K562 (cell line): ENCODE measurements at regions of chr16 and their contacts with region 1.

Region 1: DNA sequence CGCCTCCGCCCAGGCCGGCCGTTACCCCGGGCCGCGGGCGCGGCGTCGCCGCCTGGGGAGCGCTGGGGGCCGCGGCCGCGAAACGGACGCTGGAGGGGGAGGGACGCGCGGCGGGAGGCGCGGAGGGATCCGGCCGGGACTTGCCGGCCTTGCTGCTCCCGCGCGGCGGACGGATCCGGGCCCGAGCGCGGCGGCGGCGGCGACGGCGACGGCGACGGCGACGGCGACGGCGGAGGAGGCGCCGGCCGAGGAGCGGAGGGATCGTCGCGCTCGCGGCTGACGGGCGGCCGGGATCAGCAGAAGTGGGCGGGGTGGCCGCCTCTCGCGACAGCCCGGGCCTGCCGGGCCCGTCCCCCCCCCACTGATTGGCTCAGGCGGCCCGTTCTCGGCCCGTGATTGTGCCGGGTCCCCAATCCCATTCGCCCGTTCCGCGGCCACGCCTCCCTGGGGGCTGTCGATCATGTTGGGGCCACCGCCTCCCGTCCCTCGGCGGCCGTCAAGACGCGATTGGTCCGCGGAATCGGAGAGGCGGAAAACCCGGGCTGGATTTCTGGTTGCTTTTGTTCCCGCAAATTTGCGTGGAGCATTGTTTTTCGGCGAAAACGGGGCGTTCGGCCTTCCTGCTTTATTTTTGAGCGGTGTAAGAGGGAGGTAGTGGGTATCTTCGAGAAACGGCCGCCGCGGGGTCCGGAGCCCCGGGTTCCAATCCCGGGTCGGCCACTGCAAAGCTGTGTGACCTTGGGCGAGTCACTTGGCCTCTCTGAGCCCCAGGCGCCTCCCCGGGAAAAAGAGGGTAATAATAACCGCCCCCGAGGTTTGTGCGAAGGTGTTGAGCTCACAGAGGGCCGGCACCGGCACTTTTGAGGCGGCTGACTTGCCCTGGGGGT is at the start of gene ZCCHC14:
- DNase-seq: peak; percentile 99
- ATAC-seq: peak; percentile 99
- H3K4me3 ChIP-seq: peak within 1 kb of the TSS; percentile 53
- H3K27ac ChIP-seq: peak within 1 kb of the TSS; percentile 54; the same call in 1 of the 3 replicates
- H3K4me1 ChIP-seq: peaks cover 14 to 28% of the 10 kb centered on the region in 2 experiments; a peak in 4 of 5 replicates
- H3K27me3 ChIP-seq: no peaks in the 10 kb centered on the region; a peak in 2 of 5 replicates
- CTCF ChIP-seq: peak in 1 of 3 experiments; percentile 21; a peak in 2 of 6 replicates
- EP300 ChIP-seq: no peak
- POLR2A ChIP-seq: no peak
- RAD21 ChIP-seq: no peak
- polyA plus RNA-seq, gene ZCCHC14: 1.5 TPM

Region 2: DNA sequence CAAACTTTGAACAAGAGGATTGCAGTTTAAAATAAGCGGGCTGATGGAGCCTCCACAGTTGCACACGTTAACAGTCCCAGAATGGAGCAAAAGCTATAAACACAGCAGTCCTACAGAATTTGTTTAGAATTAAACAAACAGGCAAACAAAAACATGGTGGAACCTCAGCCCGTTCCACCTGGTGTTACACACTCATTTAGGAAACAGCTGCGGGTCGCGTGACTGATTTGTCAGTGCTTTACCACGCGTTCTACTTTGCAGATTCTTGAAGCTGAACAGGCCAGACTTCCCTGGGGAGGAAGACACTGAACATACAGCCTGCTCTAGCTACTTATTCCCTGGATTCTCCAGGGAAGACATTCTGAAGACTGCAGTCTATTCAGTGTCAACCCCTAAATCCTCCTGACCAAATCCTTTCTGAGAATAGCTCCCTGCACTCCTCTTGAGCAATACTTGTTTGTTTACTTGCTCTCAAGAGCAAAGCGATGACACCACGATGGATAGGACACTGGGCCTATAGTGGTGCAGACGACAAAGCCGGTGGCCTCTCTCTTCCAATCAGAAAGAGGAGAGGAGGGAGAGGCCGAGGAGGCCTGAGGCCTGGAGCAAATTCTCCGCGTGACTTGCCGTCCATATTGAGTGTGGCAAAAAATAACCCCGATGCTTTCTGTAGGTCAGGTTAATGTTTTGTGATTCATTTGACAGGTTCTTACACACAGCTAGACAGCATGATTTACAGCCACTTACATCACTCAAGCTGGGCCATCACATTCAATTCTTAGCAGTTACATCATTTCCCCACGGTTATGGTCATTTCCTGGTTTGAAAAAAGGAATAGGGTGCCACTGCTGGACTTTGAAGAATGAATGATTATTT is 104.8 kb before region 1 on chr16:
- CTCF ChIA-PET with region 1: no interaction called
- POLR2A ChIA-PET with region 1: no interaction called
- in situ Hi-C with region 1: no loop called
- intact Hi-C with region 1: loop called (anchors 5 kb)
- DNase-seq: peak; percentile 83 to 98 (median 92)
- ATAC-seq: peak; percentile 84
- H3K4me3 ChIP-seq: no peak overlapping the region
- H3K27ac ChIP-seq: peak overlapping the region; percentile 97
- H3K4me1 ChIP-seq: peaks cover 28 to 40% of the 10 kb centered on the region in 2 experiments; a peak in 4 of 5 replicates
- H3K27me3 ChIP-seq: no peaks in the 10 kb centered on the region
- CTCF ChIP-seq: no peak
- EP300 ChIP-seq: peak; percentile 93
- POLR2A ChIP-seq: peak; percentile 74
- RAD21 ChIP-seq: no peak

Region 3: DNA sequence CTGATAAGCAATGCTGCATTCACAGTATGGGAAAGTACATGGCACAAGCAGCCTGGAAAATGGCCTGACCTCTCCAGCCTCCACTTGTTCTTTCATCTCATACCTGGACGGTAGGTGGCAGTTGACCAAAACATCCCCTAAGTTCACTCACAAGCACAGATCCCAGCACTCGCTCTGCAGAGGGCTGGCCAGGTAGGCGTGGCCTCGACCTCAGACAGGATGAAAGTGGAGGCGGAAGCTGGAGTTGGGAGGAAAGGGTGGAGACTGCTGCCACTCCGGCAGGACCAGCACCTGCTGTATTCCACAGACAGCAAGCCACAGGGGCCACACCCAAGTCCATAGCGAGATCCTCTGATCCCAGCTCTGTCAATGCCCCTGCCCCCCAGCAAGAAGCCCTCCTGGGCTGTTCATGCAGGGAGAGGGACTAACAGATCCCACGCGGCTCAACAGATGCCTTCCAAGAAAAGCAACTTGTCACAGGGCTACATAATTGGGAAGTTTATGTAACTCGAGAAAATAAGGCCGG is 31.4 kb before region 1 on chr16:
- CTCF ChIA-PET with region 1: no interaction called
- POLR2A ChIA-PET with region 1: no interaction called
- in situ Hi-C with region 1: no loop called
- intact Hi-C with region 1: loop called (anchors 1 kb)
- DNase-seq: peak; percentile 90 to 96 (median 96)
- ATAC-seq: peak; percentile 96
- H3K4me3 ChIP-seq: peak overlapping the region; percentile 33
- H3K27ac ChIP-seq: peak overlapping the region; percentile 37
- H3K4me1 ChIP-seq: peaks cover 29% of the 10 kb centered on the region in 2 experiments
- H3K27me3 ChIP-seq: no peaks in the 10 kb centered on the region
- CTCF ChIP-seq: peak; percentile 56 to 83 (median 66)
- EP300 ChIP-seq: no peak
- POLR2A ChIP-seq: 0 out of 2 replicates have a peak, but pooled peaks have one; percentile 41
- RAD21 ChIP-seq: peak; percentile 31 to 65; a peak in 3 of 4 replicates

Region 4: DNA sequence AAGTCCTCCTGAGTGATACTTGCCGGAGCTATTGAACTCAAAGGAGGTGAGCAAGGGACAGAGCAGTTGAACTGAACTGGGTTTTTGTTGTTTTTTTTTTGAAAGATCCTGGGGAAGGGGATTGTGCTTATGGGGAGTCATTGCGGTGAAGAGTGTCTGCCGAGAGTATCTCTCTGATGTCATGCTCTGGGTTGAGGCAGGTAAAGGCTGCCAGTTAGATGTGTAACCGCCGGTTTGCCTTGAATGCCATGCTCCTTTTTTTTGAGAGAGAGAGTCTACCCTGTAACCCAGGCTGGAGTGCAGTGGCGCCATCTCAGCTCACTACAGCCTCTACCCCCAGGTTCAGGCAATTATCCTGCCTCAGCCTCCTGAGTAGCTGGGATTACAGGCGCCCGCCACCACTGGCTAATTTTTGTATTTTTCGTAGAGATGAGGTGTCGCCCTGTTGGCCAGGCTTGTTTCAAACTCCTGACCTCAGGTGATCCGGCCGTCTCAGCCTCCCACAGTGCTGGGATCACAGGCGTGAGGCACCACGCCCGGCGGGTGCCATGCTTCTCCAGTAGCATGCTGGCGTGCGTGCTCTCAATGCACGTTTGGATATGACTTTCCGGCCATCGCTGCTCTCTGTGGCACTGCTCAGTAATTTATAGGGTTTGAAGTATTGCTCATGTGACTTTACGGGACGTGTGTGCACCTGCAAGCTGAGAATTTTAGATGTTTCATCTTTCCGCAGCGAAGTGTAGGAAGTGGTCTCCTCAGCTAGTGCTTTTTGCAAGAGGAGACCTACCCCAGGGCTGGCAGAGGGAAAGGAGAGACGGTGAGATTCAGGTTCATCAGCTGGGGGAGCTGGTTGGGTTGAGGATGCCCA is 1085.7 kb after region 1 on chr16:
- CTCF ChIA-PET with region 1: no interaction called
- POLR2A ChIA-PET with region 1: no interaction called
- in situ Hi-C with region 1: no loop called
- intact Hi-C with region 1: no loop called
- DNase-seq: no peak
- ATAC-seq: no peak
- H3K4me3 ChIP-seq: no peak overlapping the region
- H3K27ac ChIP-seq: no peak overlapping the region
- H3K4me1 ChIP-seq: peaks cover 0 to 8% of the 10 kb centered on the region in 2 experiments; a peak in 2 of 5 replicates
- H3K27me3 ChIP-seq: no peaks in the 10 kb centered on the region
- CTCF ChIP-seq: no peak
- EP300 ChIP-seq: no peak
- POLR2A ChIP-seq: no peak
- RAD21 ChIP-seq: no peak